OCI-LY7 (cell line): ENCODE measurements at regions of chr5 and their contacts with region 1.

Region 1: GRCh38 chr5:143395638-143396352 is 7.7 kb downstream of the NR3C1 start:
- DNase-seq: peak; percentile 48
- H3K4me3 ChIP-seq: peak overlapping the region; percentile 91
- H3K27ac ChIP-seq: peak overlapping the region; percentile 34
- H3K4me1 ChIP-seq: peaks cover 50% of the 10 kb centered on the region
- CTCF ChIP-seq: no peak

Region 2: GRCh38 chr5:143355720-143356119 is 40.1 kb before region 1 on chr5:
- CTCF ChIA-PET with region 1: no interaction called
- POLR2A ChIA-PET with region 1: interaction called, 29 read pairs
- intact Hi-C with region 1: no loop called
- DNase-seq: no peak
- H3K4me3 ChIP-seq: no peak overlapping the region
- H3K27ac ChIP-seq: no peak overlapping the region
- H3K4me1 ChIP-seq: peaks cover 25% of the 10 kb centered on the region
- CTCF ChIP-seq: no peak

Region 3: DNA sequence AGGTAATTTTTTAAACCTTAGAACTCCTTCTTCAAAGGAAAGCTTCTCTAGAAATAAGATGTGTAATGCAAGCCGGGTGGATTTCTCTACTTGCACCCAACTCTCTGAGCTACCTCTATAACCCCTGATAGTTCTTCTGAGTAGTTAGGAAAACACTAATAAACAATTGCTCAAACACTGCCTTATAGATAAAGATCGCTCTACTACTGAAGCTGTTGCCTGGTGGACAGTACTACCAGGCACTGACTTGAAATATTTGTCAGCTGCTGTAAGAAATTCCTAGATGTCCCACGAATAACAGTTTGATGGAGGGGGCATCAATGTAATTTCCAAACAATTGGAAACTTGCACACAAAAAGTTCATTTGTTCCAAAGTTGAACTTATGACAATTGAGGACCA is 34.4 kb before region 1 on chr5:
- CTCF ChIA-PET with region 1: no interaction called
- POLR2A ChIA-PET with region 1: interaction called, 29 read pairs
- intact Hi-C with region 1: loop called (anchors 1 kb)
- DNase-seq: no peak
- H3K4me3 ChIP-seq: peak overlapping the region; percentile 33
- H3K27ac ChIP-seq: no peak overlapping the region
- H3K4me1 ChIP-seq: peaks cover 27% of the 10 kb centered on the region
- CTCF ChIP-seq: no peak

Region 4: DNA sequence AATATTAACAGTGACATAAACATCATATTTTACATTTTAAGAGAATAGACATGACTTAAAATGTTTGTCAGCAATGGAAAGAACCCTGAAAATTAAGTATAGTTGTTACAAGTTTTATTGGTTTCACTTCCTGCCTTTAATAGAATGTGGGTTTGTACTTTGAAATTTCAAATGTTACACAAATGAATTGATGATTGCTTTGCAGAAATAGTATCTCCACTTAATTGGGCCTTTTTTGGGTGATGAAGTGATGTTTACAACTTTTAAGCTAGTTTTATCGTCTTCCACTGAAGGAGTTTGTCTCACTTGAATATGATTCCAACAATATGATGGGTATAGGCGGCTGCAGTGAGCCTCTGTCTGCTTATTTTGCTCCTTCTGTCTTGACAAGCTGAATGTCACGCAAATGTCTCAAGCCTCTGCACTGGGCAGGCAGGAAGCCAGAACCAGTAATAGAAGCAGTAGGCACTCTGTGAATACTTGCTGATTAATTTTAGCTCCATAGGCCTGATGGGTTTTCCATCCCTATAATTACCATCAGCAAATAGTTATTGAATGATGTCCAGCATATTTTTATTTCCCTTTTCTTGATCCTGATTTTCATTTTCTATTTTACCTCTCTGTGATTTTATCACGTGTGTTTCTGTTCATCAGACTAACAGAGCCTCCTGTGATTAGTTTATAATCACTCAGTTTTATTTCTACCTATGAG is 18.3 kb after region 1 on chr5:
- CTCF ChIA-PET with region 1: interaction called, 3 read pairs
- POLR2A ChIA-PET with region 1: interaction called, 11 read pairs
- intact Hi-C with region 1: no loop called
- DNase-seq: peak; percentile 69
- H3K4me3 ChIP-seq: peak overlapping the region; percentile 55
- H3K27ac ChIP-seq: peak overlapping the region; percentile 68
- H3K4me1 ChIP-seq: peaks cover 74% of the 10 kb centered on the region
- CTCF ChIP-seq: peak; percentile 53

Region 5: GRCh38 chr5:143481666-143482531 is 86.1 kb after region 1 on chr5:
- CTCF ChIA-PET with region 1: no interaction called
- POLR2A ChIA-PET with region 1: no interaction called
- intact Hi-C with region 1: no loop called
- DNase-seq: no peak
- H3K4me3 ChIP-seq: no peak overlapping the region
- H3K27ac ChIP-seq: no peak overlapping the region
- H3K4me1 ChIP-seq: no peaks in the 10 kb centered on the region
- CTCF ChIP-seq: no peak